HCT116 (cell line): ENCODE measurements at regions of chr4 and their contacts with region 1.

Region 1: GRCh38 chr4:87926554-87927098 is 48.9 kb upstream of the SPP1 start:
- DNase-seq: no peak
- ATAC-seq: no peak
- H3K4me3 ChIP-seq: no peak overlapping the region
- H3K27ac ChIP-seq: no peak overlapping the region
- H3K4me1 ChIP-seq: no peaks in the 10 kb centered on the region
- H3K27me3 ChIP-seq: no peaks in the 10 kb centered on the region
- CTCF ChIP-seq: no peak
- POLR2A ChIP-seq: no peak
- RAD21 ChIP-seq: no peak

Region 2: GRCh38 chr4:87938746-87939145 is 12.1 kb after region 1 on chr4:
- CTCF ChIA-PET with region 1: interaction called, 3 read pairs
- POLR2A ChIA-PET with region 1: no interaction called
- RAD21 ChIA-PET with region 1: no interaction called
- intact Hi-C with region 1: loop called (anchors 1 kb)
- DNase-seq: no peak
- ATAC-seq: no peak
- H3K4me3 ChIP-seq: no peak overlapping the region
- H3K27ac ChIP-seq: no peak overlapping the region
- H3K4me1 ChIP-seq: no peaks in the 10 kb centered on the region
- H3K27me3 ChIP-seq: no peaks in the 10 kb centered on the region
- CTCF ChIP-seq: peak in 1 of 3 experiments; percentile 12; a peak in 1 of 6 replicates
- POLR2A ChIP-seq: no peak
- RAD21 ChIP-seq: peak; percentile 44

Region 3: GRCh38 chr4:88828842-88829571 is 902.4 kb after region 1 on chr4:
- CTCF ChIA-PET with region 1: no interaction called
- POLR2A ChIA-PET with region 1: no interaction called
- RAD21 ChIA-PET with region 1: no interaction called
- intact Hi-C with region 1: no loop called
- DNase-seq: no peak
- ATAC-seq: no peak
- H3K4me3 ChIP-seq: no peak overlapping the region
- H3K27ac ChIP-seq: no peak overlapping the region
- H3K4me1 ChIP-seq: peaks cover 3 to 13% of the 10 kb centered on the region in 2 experiments; a peak in 3 of 4 replicates
- H3K27me3 ChIP-seq: no peaks in the 10 kb centered on the region
- CTCF ChIP-seq: no peak
- POLR2A ChIP-seq: no peak
- RAD21 ChIP-seq: no peak